ENCODE measurements at regions of chrX and their contacts with region 1.

Region 1: GRCh38 chrX:108070891-108071290 is 20.5 kb downstream of the PSMD10 start:
- DNase-seq: no peak
- ATAC-seq: no peak
- H3K4me3 Mint-ChIP-seq: no peak overlapping the region
- H3K27ac Mint-ChIP-seq: no peak overlapping the region
- H3K4me1 Mint-ChIP-seq: peaks cover 4% of the 10 kb centered on the region
- H3K27me3 Mint-ChIP-seq: no peaks in the 10 kb centered on the region

Region 2: GRCh38 chrX:107118322-107119147 is 952.4 kb before region 1 on chrX and contains the start of gene RBM41:
- CTCF ChIA-PET with region 1: no interaction called
- POLR2A ChIA-PET with region 1: no interaction called
- intact Hi-C with region 1: no loop called
- DNase-seq: peak; percentile 81
- ATAC-seq: peak; percentile 99
- H3K4me3 Mint-ChIP-seq: peak within 1 kb of the TSS; percentile 99
- H3K27ac Mint-ChIP-seq: peak within 1 kb of the TSS; percentile 98
- H3K4me1 Mint-ChIP-seq: peaks cover 27% of the 10 kb centered on the region
- H3K27me3 Mint-ChIP-seq: no peaks in the 10 kb centered on the region
- total RNA-seq, gene RBM41: 12.0 to 12.2 TPM

Region 3: DNA sequence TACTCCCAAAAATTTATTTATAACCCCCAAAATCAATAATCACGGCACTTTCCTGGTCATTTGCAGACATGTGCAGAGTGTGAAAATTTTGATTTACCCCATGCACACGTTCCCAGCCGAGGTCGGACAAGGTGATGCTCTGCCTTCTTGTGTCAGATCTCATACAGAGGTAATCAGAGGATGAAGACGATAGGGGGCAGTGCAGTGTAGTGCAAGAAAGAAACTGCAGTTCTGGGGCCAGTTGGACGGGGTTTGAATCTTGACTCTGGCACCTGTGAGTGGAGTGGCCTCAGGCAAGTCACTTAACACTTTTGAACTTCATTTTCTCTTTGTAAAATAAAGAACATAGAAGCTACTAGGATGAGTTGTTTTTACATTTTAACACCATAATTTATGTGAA is 533.1 kb before region 1 on chrX:
- CTCF ChIA-PET with region 1: no interaction called
- POLR2A ChIA-PET with region 1: no interaction called
- intact Hi-C with region 1: loop called in 1 of 2 experiments (anchors 5 kb)
- DNase-seq: peak; percentile 60
- ATAC-seq: peak; percentile 70
- H3K4me3 Mint-ChIP-seq: no peak overlapping the region
- H3K27ac Mint-ChIP-seq: no peak overlapping the region
- H3K4me1 Mint-ChIP-seq: no peaks in the 10 kb centered on the region
- H3K27me3 Mint-ChIP-seq: peaks cover 3% of the 10 kb centered on the region

Region 4: DNA sequence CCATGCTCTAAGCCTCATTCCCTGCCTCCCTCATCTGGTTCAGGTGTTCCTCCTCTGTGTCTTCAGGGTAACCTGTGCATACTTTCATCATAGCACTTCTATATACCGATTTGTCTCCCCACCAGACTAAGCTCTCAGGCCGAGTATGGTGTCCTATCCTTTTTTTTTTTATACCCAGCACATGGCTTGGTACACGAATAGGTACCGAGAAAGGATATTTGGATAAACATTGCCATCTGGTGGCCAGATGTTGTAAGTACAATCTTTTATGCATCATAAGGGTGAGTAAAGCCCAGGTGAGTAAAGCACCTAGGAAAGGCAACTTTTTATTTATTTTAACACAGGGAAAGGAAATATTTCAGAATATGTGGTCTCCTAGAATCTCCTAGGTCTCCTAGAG is 176.9 kb before region 1 on chrX:
- CTCF ChIA-PET with region 1: no interaction called
- POLR2A ChIA-PET with region 1: no interaction called
- intact Hi-C with region 1: loop called (anchors 5 kb)
- DNase-seq: peak; percentile 16
- ATAC-seq: peak; percentile 82
- H3K4me3 Mint-ChIP-seq: no peak overlapping the region
- H3K27ac Mint-ChIP-seq: no peak overlapping the region
- H3K4me1 Mint-ChIP-seq: no peaks in the 10 kb centered on the region
- H3K27me3 Mint-ChIP-seq: no peaks in the 10 kb centered on the region

Region 5: GRCh38 chrX:107978707-107979307 is 92.1 kb before region 1 on chrX:
- CTCF ChIA-PET with region 1: no interaction called
- POLR2A ChIA-PET with region 1: no interaction called
- intact Hi-C with region 1: loop called in 1 of 2 experiments (anchors 2 kb)
- DNase-seq: no peak
- ATAC-seq: no peak
- H3K4me3 Mint-ChIP-seq: no peak overlapping the region
- H3K27ac Mint-ChIP-seq: no peak overlapping the region
- H3K4me1 Mint-ChIP-seq: peaks cover 8% of the 10 kb centered on the region
- H3K27me3 Mint-ChIP-seq: peaks cover 2% of the 10 kb centered on the region

Region 6: DNA sequence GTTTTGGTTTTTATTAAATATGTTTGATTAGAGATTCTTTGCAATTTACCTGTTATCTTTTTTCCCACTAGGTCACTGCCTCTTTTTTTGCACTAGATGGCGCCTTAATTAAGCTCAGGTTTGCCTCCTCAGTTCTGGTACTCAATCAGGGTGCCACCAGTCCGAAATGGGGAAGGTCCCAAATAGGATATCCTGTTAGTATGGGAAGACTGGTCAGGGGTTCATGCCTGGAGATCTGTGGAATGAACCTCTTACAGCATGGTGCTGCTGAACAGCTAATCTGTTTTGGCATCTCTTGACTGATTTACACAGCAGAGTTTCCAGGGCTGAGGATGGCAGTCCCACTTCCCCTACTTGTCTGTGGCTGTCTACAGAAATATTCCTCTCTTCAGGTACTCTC is 50.3 kb before region 1 on chrX:
- CTCF ChIA-PET with region 1: interaction called, 22 read pairs
- POLR2A ChIA-PET with region 1: no interaction called
- intact Hi-C with region 1: loop called (anchors 1 kb)
- DNase-seq: peak; percentile 21
- ATAC-seq: peak; percentile 30
- H3K4me3 Mint-ChIP-seq: peak overlapping the region; percentile 23
- H3K27ac Mint-ChIP-seq: peak overlapping the region; percentile 73
- H3K4me1 Mint-ChIP-seq: peaks cover 77% of the 10 kb centered on the region
- H3K27me3 Mint-ChIP-seq: no peaks in the 10 kb centered on the region

Region 7: DNA sequence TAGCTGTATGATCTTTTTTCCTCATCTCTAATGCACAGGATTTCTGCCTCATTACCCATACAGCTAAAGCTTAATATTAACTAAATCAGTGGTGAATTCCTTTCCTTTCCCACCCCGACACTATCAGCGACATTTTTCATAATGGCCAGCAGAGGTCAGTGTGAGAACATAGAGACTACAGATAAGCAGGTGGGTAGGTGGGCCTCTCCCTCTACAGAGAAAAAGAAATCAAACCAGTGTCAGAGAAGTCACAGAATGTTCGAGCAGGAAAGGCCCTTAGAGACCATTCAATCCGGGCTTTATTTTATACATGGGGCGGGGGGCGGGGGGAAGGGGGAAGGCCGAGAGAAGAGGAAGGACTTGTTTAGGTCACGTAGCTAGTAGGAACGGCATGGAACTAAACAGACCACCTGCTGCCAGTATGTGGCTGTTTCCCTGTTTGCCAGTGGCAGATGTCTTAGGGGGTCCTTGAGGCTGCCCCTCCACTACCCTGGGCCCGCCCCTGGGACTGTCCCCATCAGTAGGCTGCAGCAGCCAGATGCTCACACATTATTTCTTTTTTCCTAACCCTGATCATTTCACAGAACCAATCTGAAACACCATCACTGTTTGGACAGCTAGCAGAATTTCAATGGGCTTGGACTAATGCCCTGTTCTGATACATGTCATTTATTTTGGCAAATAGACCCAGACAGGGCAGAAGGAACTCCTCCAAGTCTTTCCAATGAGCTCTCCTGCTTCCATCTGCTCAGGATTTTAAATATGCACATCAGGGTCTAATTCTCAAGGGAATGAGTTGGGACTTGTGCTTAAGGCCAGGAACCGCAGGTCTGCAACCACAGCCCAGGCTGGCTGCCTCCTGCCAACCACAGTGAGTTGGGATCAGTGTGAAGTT is 154.1 kb after region 1 on chrX:
- CTCF ChIA-PET with region 1: no interaction called
- POLR2A ChIA-PET with region 1: no interaction called
- intact Hi-C with region 1: no loop called
- DNase-seq: no peak
- ATAC-seq: no peak
- H3K4me3 Mint-ChIP-seq: no peak overlapping the region
- H3K27ac Mint-ChIP-seq: no peak overlapping the region
- H3K4me1 Mint-ChIP-seq: no peaks in the 10 kb centered on the region
- H3K27me3 Mint-ChIP-seq: no peaks in the 10 kb centered on the region

Measured in activated CD4-positive, alpha-beta T cell treated with anti-CD3 and anti-CD28 coated beads for 36 hours (primary cell).